Dendritic cell treated with granulocyte-macrophage colony-stimulating factor and Interleukin-4, amounts not matched to agents 40 ng/mL and 50 ng/mL, for 4 days (primary cell): ENCODE measurements at regions of chr6 and their contacts with region 1.

Region 1: DNA sequence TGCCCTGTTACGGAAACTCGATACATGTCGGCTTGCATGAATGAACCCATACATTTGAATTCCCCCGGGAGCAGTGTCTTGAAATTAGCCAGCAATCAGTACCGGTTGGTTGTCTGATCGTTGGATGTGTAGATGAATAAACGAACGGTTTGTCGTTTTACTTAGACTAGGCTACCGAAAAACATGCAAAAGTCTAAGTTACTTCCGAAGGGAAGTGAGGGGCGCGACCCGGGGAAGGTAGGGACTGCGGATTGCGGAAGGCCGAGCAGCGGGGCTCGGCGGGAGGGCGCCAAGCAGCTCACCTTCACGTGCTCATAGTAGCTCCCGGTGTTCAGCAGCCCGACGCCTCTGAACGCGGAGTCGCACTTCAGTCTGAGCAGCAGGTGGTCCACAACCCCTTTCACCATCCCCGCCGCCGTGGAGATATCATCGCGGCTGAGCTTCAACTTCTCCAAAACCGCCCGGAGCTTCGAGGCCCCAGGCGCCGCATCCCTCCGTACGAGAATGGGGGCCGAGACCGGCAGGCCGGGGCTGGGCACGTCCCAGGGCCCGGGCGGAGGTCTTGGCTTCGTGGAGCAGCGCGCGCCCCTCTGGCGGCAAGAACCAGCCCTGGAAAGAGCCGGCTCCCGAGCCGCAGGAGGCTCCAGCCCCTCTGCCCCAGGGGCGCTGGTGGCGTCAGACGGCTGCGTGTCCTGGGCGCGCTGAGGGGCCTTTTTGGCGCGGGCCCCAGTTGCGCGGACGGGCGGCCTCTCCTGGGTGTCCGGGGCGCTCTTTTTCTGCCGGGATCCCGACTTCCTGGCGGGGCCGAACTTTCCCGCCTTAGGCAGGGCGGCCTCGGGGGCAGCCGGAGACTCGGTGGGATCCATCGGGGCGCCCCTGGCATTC is 632 bp downstream of the CGAS start:
- H3K4me3 Mint-ChIP-seq: peak overlapping the region; percentile 81
- H3K27ac Mint-ChIP-seq: peak overlapping the region; percentile 94
- H3K4me1 Mint-ChIP-seq: peaks cover 57% of the 10 kb centered on the region
- H3K27me3 Mint-ChIP-seq: no peaks in the 10 kb centered on the region

Region 2: DNA sequence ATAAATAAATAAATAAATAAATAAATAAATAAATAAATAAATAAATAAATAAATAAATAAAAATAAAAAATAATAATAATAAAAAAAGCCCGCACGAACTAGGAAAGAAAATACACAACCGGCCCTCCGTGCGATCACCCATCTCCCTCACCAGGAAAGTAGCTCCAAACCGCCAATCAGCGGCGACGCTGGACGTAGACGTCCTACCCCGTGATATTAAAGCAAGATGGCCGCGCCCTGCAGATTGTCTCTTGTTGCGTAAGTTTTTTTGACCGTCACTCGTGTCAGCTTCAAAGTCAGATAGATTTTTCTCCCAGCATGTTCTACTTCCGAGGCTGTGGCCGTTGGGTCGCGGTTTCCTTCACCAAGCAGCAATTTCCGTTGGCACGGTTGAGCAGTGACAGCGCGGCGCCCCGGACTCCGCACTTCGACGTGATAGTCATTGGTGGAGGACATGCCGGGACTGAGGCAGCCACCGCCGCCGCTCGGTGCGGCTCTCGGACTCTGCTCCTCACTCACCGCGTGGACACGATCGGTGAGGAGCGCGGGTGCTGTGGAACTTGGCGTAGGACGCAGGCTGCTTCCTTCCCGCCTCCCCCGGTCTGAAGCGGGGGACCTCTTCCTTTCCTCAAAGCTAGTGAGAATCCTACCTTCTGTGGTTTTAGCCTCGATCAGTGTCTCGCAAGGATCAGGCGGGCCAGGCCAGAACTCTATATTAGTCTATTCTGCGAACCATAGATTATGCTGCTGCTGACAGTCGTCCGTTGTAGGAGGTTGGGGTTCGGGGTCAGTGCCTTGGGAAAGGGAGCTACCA is 10.3 kb after region 1 on chr6 and contains the start of gene MTO1:
- intact Hi-C with region 1: loop called (anchors 1 kb)
- H3K4me3 Mint-ChIP-seq: peak within 1 kb of the TSS; percentile 96
- H3K27ac Mint-ChIP-seq: peak within 1 kb of the TSS; percentile 95
- H3K4me1 Mint-ChIP-seq: peaks cover 39% of the 10 kb centered on the region
- H3K27me3 Mint-ChIP-seq: no peaks in the 10 kb centered on the region

Region 3: GRCh38 chr6:73471686-73472290 is 20.3 kb after region 1 on chr6:
- intact Hi-C with region 1: loop called (anchors 1 kb)
- H3K4me3 Mint-ChIP-seq: peak overlapping the region; percentile 44
- H3K27ac Mint-ChIP-seq: peak overlapping the region; percentile 78
- H3K4me1 Mint-ChIP-seq: peaks cover 27% of the 10 kb centered on the region
- H3K27me3 Mint-ChIP-seq: no peaks in the 10 kb centered on the region

Region 4: GRCh38 chr6:73653571-73654424 is 202.3 kb after region 1 on chr6 and contains the start of gene SLC17A5:
- intact Hi-C with region 1: loop called (anchors 5 kb)
- H3K4me3 Mint-ChIP-seq: peak within 1 kb of the TSS; percentile 85
- H3K27ac Mint-ChIP-seq: peak within 1 kb of the TSS; percentile 95
- H3K4me1 Mint-ChIP-seq: peaks cover 13% of the 10 kb centered on the region
- H3K27me3 Mint-ChIP-seq: no peaks in the 10 kb centered on the region